Activated CD4-positive, alpha-beta memory T cell treated with anti-CD3 and anti-CD28 coated beads, Interleukin-2, amount 10 ng/mL, durations not matched to agents 7 days and 5 days (primary cell): ENCODE measurements at regions of chr10 and their contacts with region 1.

Region 1: GRCh38 chr10:79347226-79347893 is at the start of gene PPIF:
- DNase-seq: peak; percentile 95
- H3K4me3 Mint-ChIP-seq: peak within 1 kb of the TSS; percentile 87
- H3K27ac Mint-ChIP-seq: peak within 1 kb of the TSS; percentile 88
- H3K4me1 Mint-ChIP-seq: peaks cover 76% of the 10 kb centered on the region
- H3K27me3 Mint-ChIP-seq: no peaks in the 10 kb centered on the region
- total RNA-seq, gene PPIF: 80.7 to 88.4 TPM

Region 2: DNA sequence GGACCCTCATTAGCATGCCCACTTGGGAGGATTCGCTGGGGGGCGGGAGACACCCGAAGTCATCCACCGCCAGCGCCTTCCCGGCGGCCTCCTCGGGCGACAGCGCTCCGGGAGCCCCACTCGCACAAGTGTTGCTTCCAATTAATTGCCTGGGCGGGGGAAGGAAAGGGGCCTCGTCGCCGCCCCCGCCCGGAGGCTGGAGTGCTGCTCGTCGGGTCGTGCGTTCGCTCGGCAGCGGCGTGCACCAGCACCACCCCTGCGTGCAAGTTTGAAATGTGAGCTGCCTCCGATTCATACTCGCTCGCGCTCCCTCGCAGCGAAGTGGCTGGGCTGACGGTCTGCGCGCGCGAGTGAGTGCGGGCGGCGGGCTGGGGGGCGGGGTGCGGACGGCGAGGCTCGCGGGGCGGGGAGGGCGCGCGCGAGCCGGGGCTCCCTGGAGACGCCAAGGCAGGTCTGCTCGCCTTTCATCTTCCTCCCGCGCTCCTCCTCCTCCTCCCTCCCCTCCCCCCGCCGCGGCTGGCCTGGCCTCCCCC is 104.7 kb before region 1 on chr10:
- CTCF ChIA-PET with region 1: no interaction called
- POLR2A ChIA-PET with region 1: interaction called, 36 read pairs
- DNase-seq: peak; percentile 74
- H3K4me3 Mint-ChIP-seq: peak overlapping the region; percentile 77
- H3K27ac Mint-ChIP-seq: peak overlapping the region; percentile 79
- H3K4me1 Mint-ChIP-seq: peaks cover 74% of the 10 kb centered on the region
- H3K27me3 Mint-ChIP-seq: no peaks in the 10 kb centered on the region

Region 3: GRCh38 chr10:79316671-79317431 is 30.5 kb before region 1 on chr10:
- CTCF ChIA-PET with region 1: interaction called, 45 read pairs
- POLR2A ChIA-PET with region 1: interaction called, 192 read pairs
- DNase-seq: peak; percentile 46
- H3K4me3 Mint-ChIP-seq: peak overlapping the region; percentile 74
- H3K27ac Mint-ChIP-seq: peak overlapping the region; percentile 92
- H3K4me1 Mint-ChIP-seq: peaks cover 65% of the 10 kb centered on the region
- H3K27me3 Mint-ChIP-seq: no peaks in the 10 kb centered on the region

Region 4: DNA sequence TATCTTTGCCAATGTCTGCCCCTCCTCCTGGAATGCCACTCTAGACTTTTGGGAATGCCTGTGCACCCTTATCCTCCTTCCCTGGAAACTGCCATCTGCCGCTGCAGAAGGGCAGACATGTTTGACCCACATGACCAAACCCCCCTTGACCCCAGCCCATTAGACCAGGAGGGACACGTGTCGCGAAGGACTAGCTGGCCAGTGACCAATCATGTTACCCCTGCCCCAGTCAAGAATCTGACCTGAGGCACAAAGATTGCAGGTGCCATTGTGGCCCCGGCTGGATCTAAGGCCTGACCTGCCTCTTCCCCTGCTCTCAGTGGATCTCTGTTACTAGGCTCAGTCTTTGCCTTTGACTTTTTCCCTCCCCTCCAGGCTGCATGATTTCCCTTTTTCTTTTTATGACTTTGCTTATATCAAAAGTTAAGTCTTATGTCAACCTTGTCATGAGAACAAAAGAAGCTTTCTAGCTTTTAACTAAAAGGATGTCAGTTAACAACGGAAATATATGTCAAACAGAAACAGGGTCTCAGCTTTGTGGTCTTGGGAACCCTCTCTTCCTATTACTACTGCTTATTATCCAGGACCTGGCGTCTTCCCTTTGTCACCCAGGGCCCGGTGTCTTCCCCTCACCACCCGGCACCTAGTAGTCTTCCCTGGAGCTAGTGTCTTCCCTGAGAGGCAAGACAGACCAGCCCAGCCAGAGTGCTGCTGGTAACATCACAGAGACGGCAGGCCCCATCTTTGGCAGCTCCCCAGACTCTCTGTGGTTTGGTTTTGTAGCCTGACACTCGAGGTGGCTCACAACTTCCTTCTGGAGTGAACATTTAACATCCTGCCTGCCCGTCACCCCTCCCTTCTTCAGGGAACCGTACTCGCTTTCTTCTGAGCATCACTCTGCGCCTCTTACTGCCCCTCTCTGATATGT is 24.5 kb before region 1 on chr10:
- CTCF ChIA-PET with region 1: interaction called, 45 read pairs
- POLR2A ChIA-PET with region 1: interaction called, 192 read pairs
- DNase-seq: peak; percentile 84
- H3K4me3 Mint-ChIP-seq: peak overlapping the region; percentile 46
- H3K27ac Mint-ChIP-seq: peak overlapping the region; percentile 97
- H3K4me1 Mint-ChIP-seq: peaks cover 72% of the 10 kb centered on the region
- H3K27me3 Mint-ChIP-seq: no peaks in the 10 kb centered on the region

Region 5: GRCh38 chr10:79331709-79332108 is 15.7 kb before region 1 on chr10:
- CTCF ChIA-PET with region 1: interaction called, 15 read pairs
- POLR2A ChIA-PET with region 1: interaction called, 38 read pairs
- DNase-seq: peak; percentile 82
- H3K4me3 Mint-ChIP-seq: no peak overlapping the region
- H3K27ac Mint-ChIP-seq: peak overlapping the region; percentile 70
- H3K4me1 Mint-ChIP-seq: peaks cover 38% of the 10 kb centered on the region
- H3K27me3 Mint-ChIP-seq: no peaks in the 10 kb centered on the region